ENCODE measurements at regions of chr1 and their contacts with region 1.

Region 1: GRCh38 chr1:112619520-112620376 is at the start of gene CAPZA1:
- DNase-seq: peak; percentile 79
- ATAC-seq: peak; percentile 92
- H3K4me3 ChIP-seq: peak within 1 kb of the TSS; percentile 76 to 93
- H3K27ac ChIP-seq: peak within 1 kb of the TSS; percentile 87
- H3K4me1 ChIP-seq: peaks cover 9 to 24% of the 10 kb centered on the region in 2 experiments; a peak in 3 of 4 replicates
- H3K27me3 ChIP-seq: no peaks in the 10 kb centered on the region
- CTCF ChIP-seq: no peak
- POLR2A ChIP-seq: peak; percentile 89
- RAD21 ChIP-seq: no peak
- total RNA-seq, gene CAPZA1: 148 TPM

Region 2: DNA sequence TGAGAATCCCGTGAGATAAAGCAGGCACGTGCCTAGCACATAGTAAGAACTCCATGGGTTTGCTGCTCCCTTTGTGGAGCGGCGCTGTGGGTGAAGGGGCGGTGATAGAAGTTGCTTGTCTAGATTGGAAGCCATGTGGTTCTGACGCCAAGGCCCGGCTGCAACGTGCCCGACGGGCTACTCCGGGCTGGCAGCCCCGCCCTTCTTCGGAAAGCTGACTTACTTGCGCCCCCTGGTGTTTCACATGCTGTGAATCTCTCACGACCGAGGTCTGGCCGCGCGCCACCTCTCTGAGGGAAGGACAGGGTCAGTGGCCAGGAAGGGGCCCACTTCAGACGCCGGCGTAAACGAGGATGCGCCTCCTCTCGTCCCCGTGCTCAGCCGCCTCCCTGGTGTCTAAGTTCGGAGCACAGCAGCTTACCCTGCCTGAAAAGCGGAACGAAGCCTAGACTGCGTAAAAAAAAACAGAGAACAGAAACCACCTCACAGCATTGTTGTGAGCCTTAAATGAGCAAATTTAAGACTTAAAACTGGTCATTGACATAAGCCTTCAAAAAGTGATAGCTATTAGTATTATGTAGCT is 153.6 kb before region 1 on chr1:
- CTCF ChIA-PET with region 1: no interaction called
- POLR2A ChIA-PET with region 1: no interaction called
- RAD21 ChIA-PET with region 1: no interaction called
- intact Hi-C with region 1: loop called (anchors 2 kb)
- DNase-seq: peak; percentile 82
- ATAC-seq: peak; percentile 93
- H3K4me3 ChIP-seq: peak overlapping the region; percentile 19 to 26
- H3K27ac ChIP-seq: no peak overlapping the region
- H3K4me1 ChIP-seq: peaks cover 0 to 22% of the 10 kb centered on the region in 2 experiments; a peak in 2 of 4 replicates
- H3K27me3 ChIP-seq: no peaks in the 10 kb centered on the region
- CTCF ChIP-seq: peak; percentile 74 to 89 (median 80)
- POLR2A ChIP-seq: no peak
- RAD21 ChIP-seq: peak; percentile 90

Region 3: DNA sequence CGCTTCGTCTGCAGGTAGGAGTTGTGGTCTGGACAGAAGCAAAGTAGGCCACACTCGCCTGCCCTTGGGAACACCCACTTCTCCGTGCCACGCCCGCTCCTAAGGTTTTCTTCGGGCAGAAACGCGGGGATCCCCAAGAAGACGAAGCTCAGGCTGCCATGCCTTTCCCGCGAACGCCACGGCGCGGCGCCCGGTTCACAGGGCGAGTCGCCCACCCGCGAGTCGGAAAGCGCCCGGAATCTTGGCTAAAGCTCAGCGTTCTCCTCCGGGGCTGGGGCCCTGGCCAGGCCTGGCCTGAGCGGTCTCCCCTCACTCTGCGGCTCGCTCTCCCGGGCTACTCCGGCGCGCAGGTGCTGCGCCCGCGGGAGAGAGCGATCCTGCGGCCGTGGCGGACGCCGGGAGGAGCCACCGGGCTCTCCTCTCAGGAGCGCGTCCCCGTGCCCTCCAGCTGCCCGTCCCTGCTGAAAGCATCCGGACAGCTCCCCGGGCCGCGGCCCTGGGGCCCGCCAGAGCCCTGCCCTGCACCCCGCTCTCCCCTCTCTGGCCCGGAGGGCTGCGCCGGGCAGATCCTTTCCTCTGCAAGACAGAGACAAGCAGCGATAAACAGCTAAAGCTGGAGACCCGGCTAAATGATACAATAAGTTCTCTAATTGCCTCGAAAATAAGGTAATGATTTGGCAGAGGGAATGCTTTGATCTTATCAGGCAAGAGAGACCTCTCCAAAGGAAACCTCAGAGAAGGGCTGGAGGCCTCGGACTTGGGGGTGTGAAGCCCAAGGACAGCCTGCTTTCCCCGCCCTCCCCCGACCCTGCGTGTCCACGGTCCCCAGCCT is 117.7 kb before region 1 on chr1:
- CTCF ChIA-PET with region 1: interaction called, 11 read pairs
- POLR2A ChIA-PET with region 1: no interaction called
- RAD21 ChIA-PET with region 1: no interaction called
- intact Hi-C with region 1: loop called (anchors 10 kb)
- DNase-seq: no peak
- ATAC-seq: peak; percentile 78
- H3K4me3 ChIP-seq: peak overlapping the region; percentile 28 to 50
- H3K27ac ChIP-seq: no peak overlapping the region
- H3K4me1 ChIP-seq: peaks cover 0 to 8% of the 10 kb centered on the region in 2 experiments; a peak in 1 of 4 replicates
- H3K27me3 ChIP-seq: no peaks in the 10 kb centered on the region
- CTCF ChIP-seq: peak; percentile 27 to 35 (median 33); a peak in 4 of 6 replicates
- POLR2A ChIP-seq: no peak
- RAD21 ChIP-seq: peak; percentile 59

Region 4: DNA sequence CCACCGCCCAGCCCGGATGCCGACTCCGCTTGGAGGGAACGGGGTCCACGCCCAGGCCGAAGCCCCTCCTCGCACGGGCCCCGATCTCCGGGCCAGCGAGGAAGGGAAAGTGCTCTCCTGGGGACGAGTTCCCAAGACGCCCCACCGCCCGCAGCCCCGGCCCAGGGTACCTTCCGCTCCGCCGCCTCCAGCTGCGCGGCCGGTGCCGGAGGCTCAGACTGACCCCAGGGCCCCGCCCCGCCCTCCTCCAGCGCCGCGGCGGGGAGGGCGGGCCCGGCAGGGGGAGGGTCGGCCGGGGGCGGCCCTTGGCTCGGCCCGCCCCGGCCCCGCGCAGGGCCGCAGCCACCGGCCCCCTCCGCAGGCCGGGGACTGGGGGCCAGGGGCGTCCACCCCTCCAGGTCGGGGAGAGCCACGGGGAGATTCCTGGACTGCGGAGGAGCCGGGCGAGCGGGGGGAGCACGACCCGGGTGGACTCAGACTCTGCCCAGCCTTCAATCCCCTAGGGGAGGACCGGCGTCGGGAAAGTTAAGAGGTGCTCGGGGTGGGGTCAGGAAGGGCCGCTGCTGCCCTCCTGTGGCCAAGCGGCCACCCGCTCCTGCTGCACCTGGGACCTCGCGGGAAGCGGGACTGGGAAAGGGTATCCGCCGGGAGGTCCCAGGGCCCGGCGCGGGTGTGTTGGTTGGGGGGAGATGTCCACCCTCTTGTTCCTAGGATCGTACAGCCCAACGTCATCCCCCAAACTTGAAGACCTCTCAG is 87.3 kb after region 1 on chr1 and contains the start of gene RHOC:
- CTCF ChIA-PET with region 1: interaction called, 3 read pairs
- POLR2A ChIA-PET with region 1: interaction called, 4 read pairs
- RAD21 ChIA-PET with region 1: no interaction called
- intact Hi-C with region 1: loop called (anchors 2 kb)
- DNase-seq: peak; percentile 75
- ATAC-seq: peak; percentile 82
- H3K4me3 ChIP-seq: peak within 1 kb of the TSS; percentile 87 to 90
- H3K27ac ChIP-seq: peak within 1 kb of the TSS; percentile 77
- H3K4me1 ChIP-seq: peaks cover 22 to 44% of the 10 kb centered on the region in 2 experiments
- H3K27me3 ChIP-seq: no peaks in the 10 kb centered on the region
- CTCF ChIP-seq: peak in 2 of 3 experiments; percentile 78 to 93; a peak in 4 of 6 replicates
- POLR2A ChIP-seq: no peak
- RAD21 ChIP-seq: no peak
- total RNA-seq, gene RHOC: 154 TPM

Measured in HCT116 (cell line).